ENCODE measurements at regions of chr2 and their contacts with region 1.

Region 1: DNA sequence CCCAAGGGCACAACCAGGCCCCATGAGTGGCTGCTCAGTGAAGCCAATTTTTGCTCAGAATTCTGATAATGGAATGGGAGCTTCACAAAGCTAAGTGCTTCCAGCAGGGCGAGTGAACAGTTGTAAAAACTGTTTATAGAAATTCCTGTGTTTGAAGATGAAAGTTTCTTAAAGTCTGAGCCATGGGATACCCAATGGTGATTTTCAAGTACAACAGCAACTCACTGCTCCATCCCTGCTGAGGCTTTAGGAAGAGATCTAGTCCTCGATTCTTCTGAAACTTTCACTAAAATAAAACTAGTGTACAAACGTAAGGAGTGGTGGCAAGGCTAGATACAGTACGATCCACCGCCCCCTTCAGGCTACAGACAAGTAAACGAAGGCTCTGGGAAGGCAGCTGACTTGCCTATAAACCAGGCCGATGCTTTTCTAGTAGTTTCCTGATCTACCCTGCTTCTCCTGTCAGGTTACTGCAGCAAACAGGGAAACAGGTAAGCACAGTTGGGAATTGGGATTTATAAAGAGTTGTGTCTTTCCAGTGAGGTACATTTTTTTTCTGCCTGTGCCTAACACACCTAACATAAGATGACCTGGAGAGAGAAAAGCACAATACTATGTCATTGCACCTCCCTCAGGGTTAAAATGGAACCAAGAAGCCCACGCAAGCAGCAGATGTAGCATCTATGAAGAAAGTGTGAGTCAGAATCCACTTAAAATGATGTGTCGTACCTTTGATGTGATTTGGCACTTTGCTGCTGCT is 108.7 kb downstream of the UXS1 start:
- DNase-seq: peak; percentile 66 to 80 (median 77)
- H3K4me3 ChIP-seq: no peak overlapping the region
- H3K27ac ChIP-seq: no peak overlapping the region
- H3K4me1 ChIP-seq: peaks cover 0 to 4% (median under 1%) of the 10 kb centered on the region in 4 experiments
- H3K27me3 ChIP-seq: no peaks in the 10 kb centered on the region

Region 2: GRCh38 chr2:105782123-105782522 is 303.2 kb before region 1 on chr2:
- CTCF ChIA-PET with region 1: interaction called, 24 read pairs
- POLR2A ChIA-PET with region 1: no interaction called
- DNase-seq: peak; percentile 50 to 66 (median 58)
- H3K4me3 ChIP-seq: no peak overlapping the region
- H3K27ac ChIP-seq: no peak overlapping the region
- H3K4me1 ChIP-seq: peaks cover under 1 to 57% (median 35%) of the 10 kb centered on the region in 4 experiments
- H3K27me3 ChIP-seq: no peaks in the 10 kb centered on the region

Region 3: GRCh38 chr2:106061611-106062349 is 23.6 kb before region 1 on chr2:
- CTCF ChIA-PET with region 1: no interaction called
- POLR2A ChIA-PET with region 1: no interaction called
- DNase-seq: no peak
- H3K4me3 ChIP-seq: no peak overlapping the region
- H3K27ac ChIP-seq: no peak overlapping the region
- H3K4me1 ChIP-seq: peaks cover 0 to 19% (median 13%) of the 10 kb centered on the region in 4 experiments
- H3K27me3 ChIP-seq: peaks cover 0 to 22% (median 18%) of the 10 kb centered on the region in 5 experiments

Measured in common myeloid progenitor, CD34-positive (primary cell).